ENCODE measurements at regions of chr12 and their contacts with region 1.

Region 1: DNA sequence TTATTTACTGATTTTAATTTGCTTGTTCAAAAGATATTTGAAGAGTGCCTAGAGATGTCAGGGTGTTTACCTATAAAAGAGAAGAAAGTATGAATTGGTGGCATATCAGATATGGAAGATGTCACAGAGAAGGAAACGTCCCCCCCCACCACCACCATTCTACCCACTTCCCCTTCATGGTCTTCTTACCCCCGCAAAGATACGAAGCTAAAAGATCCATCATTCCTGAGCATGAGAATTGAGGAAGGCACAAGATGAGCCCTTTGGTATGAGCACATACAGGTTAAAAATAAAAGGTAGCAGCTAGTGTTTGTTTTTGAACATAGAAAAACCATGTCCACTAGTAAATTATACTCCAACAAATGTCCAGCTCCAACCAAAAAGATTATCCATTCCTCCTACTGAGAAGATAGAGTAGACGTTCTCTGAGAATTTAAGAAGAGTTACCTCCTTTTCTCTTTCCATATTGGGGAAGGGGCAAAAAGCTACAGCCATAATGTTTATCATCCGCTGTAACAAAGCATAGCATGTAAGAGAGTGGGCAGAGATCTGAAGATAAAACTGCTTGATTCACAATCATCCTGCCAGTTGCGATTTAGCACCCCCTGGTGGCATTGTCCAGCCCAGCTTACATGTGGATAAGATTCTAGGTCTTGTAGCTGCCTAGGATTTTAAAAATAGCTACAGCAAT is 29.1 kb downstream of the NFYB start:
- DNase-seq: peak; percentile 55
- H3K4me3 ChIP-seq: no peak overlapping the region
- CTCF ChIP-seq: peak; percentile 90

Region 2: DNA sequence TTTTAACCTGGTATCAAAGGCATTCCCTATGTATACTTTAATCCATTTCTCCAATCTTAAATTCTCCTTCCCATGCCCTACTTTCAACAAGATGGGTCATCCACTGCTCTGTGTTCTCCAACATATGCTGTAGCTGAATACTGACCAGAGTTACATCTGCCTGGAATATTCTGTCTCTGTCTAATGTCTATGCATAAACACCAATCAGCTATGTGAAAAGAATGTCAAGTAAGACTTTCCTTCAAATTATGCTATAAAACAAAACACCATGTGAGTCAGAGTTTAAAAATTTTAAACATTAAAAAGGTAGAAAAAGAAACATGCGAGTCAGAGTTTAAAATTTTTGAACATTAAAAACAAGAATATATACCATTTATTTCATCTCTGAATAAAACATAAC is 287.1 kb before region 1 on chr12:
- CTCF ChIA-PET with region 1: no interaction called
- POLR2A ChIA-PET with region 1: no interaction called
- DNase-seq: no peak
- H3K4me3 ChIP-seq: no peak overlapping the region
- CTCF ChIP-seq: no peak

Region 3: GRCh38 chr12:103884316-103884715 is 224.6 kb before region 1 on chr12:
- CTCF ChIA-PET with region 1: interaction called, 78 read pairs
- POLR2A ChIA-PET with region 1: no interaction called
- DNase-seq: no peak
- H3K4me3 ChIP-seq: peak overlapping the region; percentile 24
- CTCF ChIP-seq: peak; percentile 38

Region 4: GRCh38 chr12:104057771-104058197 is 51.1 kb before region 1 on chr12:
- CTCF ChIA-PET with region 1: interaction called, 79 read pairs
- POLR2A ChIA-PET with region 1: no interaction called
- DNase-seq: no peak
- H3K4me3 ChIP-seq: no peak overlapping the region
- CTCF ChIP-seq: peak; percentile 55

Region 5: DNA sequence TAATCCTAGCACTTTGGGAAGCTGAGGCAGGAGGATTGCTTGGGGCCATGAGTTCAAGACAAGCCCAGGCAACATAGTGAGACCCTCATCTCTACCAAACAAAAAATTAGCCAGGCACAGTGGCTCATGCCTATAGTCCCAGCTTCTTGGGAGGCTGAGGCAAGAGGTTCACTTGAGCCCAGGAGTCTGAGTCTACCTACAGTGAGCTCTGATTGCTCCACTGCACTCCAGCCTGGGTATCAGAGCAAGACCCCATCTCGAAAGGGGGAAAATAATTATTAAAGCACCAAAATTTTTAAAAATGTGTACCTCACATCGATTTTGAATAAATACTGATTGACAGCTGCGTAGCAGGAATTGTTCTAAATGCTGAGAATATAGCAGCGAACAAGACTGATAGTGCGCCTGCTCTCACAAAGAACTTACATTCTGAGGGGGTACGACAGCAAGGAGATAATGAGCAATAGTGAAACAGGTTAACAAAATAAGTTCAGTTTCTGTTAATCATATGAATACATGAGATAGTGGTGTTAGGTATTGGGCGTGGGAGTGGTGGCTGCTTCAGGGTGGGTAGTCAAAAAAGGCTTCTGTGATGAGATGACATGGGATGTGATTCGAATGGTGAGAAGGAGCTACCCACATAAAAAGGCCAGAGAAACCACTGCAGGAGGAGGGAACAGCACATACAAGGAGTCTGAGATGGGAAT is 25.0 kb before region 1 on chr12:
- CTCF ChIA-PET with region 1: interaction called, 20 read pairs
- POLR2A ChIA-PET with region 1: no interaction called
- DNase-seq: no peak
- H3K4me3 ChIP-seq: no peak overlapping the region
- CTCF ChIP-seq: no peak

Region 6: GRCh38 chr12:104121001-104121400 is 12.1 kb after region 1 on chr12:
- CTCF ChIA-PET with region 1: interaction called, 50 read pairs
- POLR2A ChIA-PET with region 1: no interaction called
- DNase-seq: no peak
- H3K4me3 ChIP-seq: no peak overlapping the region
- CTCF ChIP-seq: no peak